ENCODE measurements at regions of chr1 and their contacts with region 1.

Region 1: DNA sequence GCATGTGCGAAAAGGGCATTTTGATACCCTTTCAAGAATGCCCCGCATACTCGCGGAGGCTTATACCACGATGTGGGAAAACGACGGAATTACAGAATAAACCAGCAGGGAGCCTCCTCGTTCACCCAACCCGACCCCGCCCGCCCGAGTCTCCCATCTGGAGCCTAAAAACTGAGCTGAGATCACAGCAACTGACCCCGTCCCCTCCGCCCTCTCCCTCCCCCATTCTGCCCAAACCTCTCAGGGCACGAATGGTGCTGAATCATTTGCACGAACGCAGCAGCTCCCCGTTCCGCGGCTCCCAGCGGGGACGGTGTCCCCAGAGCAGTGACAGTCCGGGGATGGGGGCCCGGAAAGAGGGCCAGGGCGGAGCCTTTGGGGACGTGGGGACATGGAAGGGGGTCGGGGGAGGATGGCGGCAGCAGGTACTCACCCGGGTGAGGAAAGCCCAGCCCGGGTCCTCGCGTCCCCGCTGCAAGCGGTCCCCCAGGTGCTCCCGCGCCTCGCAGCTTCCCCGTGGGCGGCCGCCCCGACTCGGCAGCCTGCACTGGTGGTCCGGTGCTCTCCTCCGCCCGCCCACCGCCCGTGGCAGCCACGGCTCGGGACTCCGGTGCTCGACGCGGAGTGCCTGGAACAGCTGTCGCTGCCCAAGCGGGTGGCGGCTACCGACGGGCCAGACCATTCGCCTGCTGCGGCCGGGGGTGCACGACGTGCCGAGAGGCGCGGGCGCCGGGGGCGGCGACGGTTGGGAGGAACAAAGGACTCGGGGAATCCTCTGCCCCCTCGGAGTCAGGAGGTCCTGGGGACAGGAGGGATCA is at the start of gene TTLL7:
- DNase-seq: peak; percentile 92
- H3K4me3 ChIP-seq: peak within 1 kb of the TSS; percentile 81 to 93
- H3K27ac ChIP-seq: peak within 1 kb of the TSS; percentile 67 to 94
- H3K4me1 ChIP-seq: peaks cover 0 to 6% of the 10 kb centered on the region in 2 experiments; a peak in 3 of 4 replicates
- H3K27me3 ChIP-seq: no peaks in the 10 kb centered on the region
- CTCF ChIP-seq: no peak
- EP300 ChIP-seq: peak in 1 of 2 experiments; percentile 58; a peak in 1 of 4 replicates
- RAD21 ChIP-seq: no peak; the same call in 1 of the 2 replicates
- polyA plus RNA-seq, gene TTLL7: 7.3 and 11.5 TPM in 2 replicates

Region 2: DNA sequence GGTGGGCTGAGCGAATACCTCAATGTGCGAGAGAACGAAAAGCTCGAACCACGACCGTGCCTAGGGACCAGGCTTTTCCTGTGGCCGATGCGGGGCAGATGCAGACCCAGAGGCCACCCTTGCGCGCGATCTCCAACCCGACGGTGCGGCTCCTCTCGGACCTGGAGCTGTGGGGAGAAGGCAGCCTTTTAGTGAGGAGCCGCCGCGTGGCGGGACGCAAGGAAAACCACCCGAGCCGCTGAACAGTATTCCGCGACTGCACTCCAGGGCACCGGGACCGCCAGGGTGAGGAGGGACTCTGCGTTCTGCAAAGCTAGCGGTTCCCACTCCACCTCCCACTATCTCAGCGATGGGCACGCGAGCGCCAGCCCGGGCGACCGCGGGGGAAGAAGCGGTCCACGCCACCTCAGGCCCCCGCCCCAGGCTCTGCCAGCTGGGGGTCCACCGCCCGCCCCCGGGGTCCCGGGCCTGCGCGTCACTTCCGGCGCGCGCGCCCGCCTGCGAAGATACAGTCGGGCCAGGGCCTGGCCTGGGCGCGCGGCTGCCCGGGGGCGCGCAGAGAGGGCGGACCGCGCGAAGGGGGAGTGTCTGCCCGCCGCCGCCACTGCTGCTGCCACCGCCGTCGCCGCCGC is 78.9 kb after region 1 on chr1:
- CTCF ChIA-PET with region 1: interaction called, 3 read pairs
- POLR2A ChIA-PET with region 1: interaction called, 10 read pairs
- DNase-seq: peak; percentile 99
- H3K4me3 ChIP-seq: peak overlapping the region; percentile 77 to 94
- H3K27ac ChIP-seq: peak overlapping the region; percentile 87 to 95
- H3K4me1 ChIP-seq: peaks cover 0 to 8% of the 10 kb centered on the region in 2 experiments; a peak in 2 of 4 replicates
- H3K27me3 ChIP-seq: no peaks in the 10 kb centered on the region
- CTCF ChIP-seq: no peak; the same call in 1 of the 2 replicates
- EP300 ChIP-seq: no peak
- RAD21 ChIP-seq: 0 out of 2 replicates have a peak, but pooled peaks have one; percentile 4

Measured in SK-N-SH (cell line).